ENCODE measurements at regions of chrX and their contacts with region 1.

Region 1: GRCh38 chrX:135112096-135112729 is 8.1 kb downstream of the ETDB start:
- DNase-seq: peak; percentile 49
- ATAC-seq: peak; percentile 51
- H3K4me3 Mint-ChIP-seq: no peak overlapping the region
- H3K27ac Mint-ChIP-seq: no peak overlapping the region
- H3K4me1 Mint-ChIP-seq: no peaks in the 10 kb centered on the region
- H3K27me3 Mint-ChIP-seq: peaks cover 29% of the 10 kb centered on the region

Region 2: DNA sequence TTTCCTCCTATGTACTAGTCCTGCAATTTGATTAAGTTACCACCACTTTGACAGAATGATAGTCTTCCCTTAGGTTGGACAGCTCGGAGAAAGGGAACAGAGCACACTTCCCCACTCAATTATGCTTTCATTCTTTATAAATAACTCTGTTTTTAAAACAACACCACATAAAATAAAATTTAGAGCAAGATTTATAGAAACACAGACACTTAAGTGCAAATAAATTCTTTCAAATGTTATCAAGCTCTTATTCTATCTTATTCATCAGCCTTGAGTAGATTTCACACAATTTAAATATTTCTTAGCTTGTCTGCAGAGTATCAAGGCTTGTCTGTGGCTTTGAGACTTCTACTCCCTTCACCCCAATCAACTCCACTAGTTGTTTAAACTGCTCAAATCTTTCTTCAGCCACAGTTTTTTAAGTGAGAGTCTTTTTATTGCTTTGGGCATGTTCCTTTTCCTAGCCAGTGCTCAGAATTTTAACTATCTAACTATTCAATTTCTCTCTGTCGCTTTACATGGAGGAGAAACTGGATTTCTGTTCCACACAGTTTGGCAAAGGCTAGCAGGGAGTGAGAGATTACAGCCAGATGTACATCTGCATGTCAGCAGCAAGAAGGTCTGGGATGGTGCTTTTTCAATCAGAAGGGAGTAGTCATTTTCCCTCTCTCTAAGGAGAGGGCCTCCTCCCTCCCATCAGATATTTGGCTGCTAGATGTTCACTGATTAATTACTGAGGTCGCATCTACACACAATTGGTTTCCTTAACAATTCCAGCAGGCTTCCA is 400.9 kb before region 1 on chrX:
- CTCF ChIA-PET with region 1: no interaction called
- POLR2A ChIA-PET with region 1: no interaction called
- DNase-seq: no peak
- ATAC-seq: no peak
- H3K4me3 Mint-ChIP-seq: no peak overlapping the region
- H3K27ac Mint-ChIP-seq: no peak overlapping the region
- H3K4me1 Mint-ChIP-seq: no peaks in the 10 kb centered on the region
- H3K27me3 Mint-ChIP-seq: peaks cover 5% of the 10 kb centered on the region

Region 3: GRCh38 chrX:134891652-134892051 is 220.6 kb before region 1 on chrX:
- CTCF ChIA-PET with region 1: no interaction called
- POLR2A ChIA-PET with region 1: no interaction called
- DNase-seq: no peak
- ATAC-seq: no peak
- H3K4me3 Mint-ChIP-seq: no peak overlapping the region
- H3K27ac Mint-ChIP-seq: no peak overlapping the region
- H3K4me1 Mint-ChIP-seq: no peaks in the 10 kb centered on the region
- H3K27me3 Mint-ChIP-seq: no peaks in the 10 kb centered on the region

Region 4: GRCh38 chrX:135185795-135186443 is 73.7 kb after region 1 on chrX:
- CTCF ChIA-PET with region 1: interaction called, 22 read pairs
- POLR2A ChIA-PET with region 1: no interaction called
- DNase-seq: peak; percentile 27
- ATAC-seq: peak; percentile 60
- H3K4me3 Mint-ChIP-seq: no peak overlapping the region
- H3K27ac Mint-ChIP-seq: no peak overlapping the region
- H3K4me1 Mint-ChIP-seq: peaks cover 1% of the 10 kb centered on the region
- H3K27me3 Mint-ChIP-seq: peaks cover 23% of the 10 kb centered on the region

Measured in activated CD8-positive, alpha-beta T cell treated with anti-CD3 and anti-CD28 coated beads, Interleukin-2, amount 10 ng/mL, durations not matched to agents 7 days and 5 days (primary cell).